Dorsolateral prefrontal cortex (tissue), 120 donors: ENCODE measurements at regions of chr1 and their contacts with region 1.

Region 1: GRCh38 chr1:20742671-20743070 is 10.2 kb upstream of the SH2D5 start:
- DNase-seq: no peak
- H3K4me3 ChIP-seq: no peak overlapping the region
- H3K27ac ChIP-seq: peak overlapping the region in 1 of 59 donors; percentile 2
- H3K27me3 ChIP-seq: no peaks in the 10 kb centered on the region
- CTCF ChIP-seq: no peak

Region 2: DNA sequence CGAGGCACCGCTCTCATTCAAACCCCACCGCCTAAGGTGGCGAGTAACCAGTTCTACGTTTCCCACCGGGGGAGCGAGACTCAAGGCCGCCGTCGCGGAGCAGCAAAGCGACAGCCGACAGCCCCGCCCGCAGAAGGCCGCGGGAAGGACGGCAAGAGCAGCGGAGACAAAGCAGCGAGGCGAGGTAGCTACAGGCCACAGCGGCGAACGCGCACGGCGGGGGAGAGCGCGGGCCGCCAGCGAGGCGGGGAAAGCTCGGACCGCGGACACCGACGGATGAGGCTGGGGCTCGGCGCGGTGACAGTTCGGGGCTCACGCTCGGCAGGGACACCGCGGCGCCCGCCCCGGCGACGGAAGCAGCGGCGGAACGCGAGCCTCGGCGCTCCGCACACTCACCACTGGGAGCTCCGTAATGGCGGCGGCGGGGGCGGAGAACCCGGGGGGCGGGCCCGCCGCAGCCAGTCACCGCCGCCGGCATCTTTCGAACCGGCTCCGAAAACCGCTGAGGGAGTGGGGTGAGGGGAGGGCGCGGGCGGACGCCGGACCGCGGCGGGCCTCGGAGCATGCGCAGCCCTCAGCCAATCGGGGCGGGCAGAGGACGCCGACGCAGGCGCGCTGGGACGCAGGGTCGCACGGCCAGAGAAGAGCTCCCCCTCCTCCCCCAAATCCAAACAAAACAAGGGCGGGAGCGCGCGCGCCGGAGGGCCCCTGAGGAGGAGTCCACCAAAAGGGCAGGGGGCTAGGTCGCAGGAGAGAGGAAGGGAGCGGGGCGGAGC is 43.8 kb after region 1 on chr1:
- intact Hi-C with region 1: loop called in 1 of 2 experiments (anchors 5 kb)
- DNase-seq: peak; percentile 79 to 96 (median 90)
- H3K4me3 ChIP-seq: peak overlapping the region; percentile 61 to 100 (median 92)
- H3K27ac ChIP-seq: peak overlapping the region; percentile 87 to 100 (median 98)
- H3K27me3 ChIP-seq: no peaks in the 10 kb centered on the region
- CTCF ChIP-seq: peak in 27 of 56 donors; percentile 2 to 49 (median 18)